ENCODE measurements at regions of chr10 and their contacts with region 1.

Region 1: DNA sequence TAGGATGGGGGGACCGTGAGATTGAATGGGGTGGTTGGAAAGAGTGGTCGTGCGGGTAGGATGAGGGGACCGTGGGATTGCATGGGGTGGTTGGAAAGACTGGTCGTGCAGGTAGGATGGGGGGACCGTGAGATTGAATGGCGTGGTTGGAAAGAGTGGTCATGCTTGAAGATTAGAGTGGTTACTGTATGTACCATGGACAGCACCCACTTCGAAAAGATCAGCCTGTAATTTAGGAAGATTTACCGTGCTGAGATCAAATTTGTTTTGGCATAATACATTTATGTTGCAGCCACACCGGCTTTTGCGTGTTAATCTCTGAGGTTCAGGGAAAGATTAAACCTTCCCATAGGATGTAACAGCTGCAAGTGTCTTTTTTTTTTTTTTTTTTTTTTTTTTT is 495.2 kb upstream of the ADARB2 start:
- DNase-seq: no peak

Region 2: GRCh38 chr10:2196272-2196671 is 36.2 kb before region 1 on chr10:
- intact Hi-C with region 1: no loop called
- DNase-seq: no peak

Region 3: DNA sequence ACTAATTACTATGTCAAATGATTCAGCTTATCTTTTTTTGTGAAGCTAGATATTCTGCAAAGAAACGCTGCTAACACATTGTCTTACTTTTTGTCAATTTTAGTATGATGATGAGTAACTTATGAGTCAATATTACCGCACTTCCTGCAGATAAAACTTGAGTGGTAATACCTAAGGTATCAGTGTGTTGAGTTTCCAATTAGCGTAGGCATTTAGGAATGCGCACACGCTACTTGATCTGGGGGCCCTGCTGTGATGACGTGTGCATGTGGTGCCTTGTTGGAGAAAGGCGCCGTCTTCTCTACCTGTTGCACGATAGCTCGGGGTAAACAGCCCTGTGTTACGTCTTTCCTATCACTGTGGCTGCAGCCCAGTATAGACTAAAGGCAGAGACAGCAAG is 18.4 kb before region 1 on chr10:
- intact Hi-C with region 1: loop called in 1 of 2 experiments (anchors 2 kb)
- DNase-seq: no peak

Region 4: DNA sequence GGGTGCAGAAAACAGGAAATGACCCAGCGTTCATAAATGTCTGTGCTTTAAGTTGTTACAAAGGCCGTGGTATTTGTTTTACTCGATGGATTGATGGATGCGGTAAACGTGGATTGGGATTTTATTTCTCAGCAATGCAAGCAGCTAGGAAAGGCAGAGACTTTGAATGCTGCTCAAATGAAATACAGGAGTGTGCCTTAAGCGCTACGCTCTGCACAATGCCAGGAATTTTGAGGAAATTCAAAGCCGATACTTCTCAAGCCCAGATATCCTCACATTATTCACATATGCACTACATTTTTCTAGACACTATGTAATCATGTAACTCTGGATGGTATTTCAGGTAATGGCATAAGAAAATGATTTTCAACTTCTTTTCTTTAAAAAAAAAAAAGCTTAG is 19.2 kb after region 1 on chr10:
- intact Hi-C with region 1: no loop called
- DNase-seq: no peak